Calu3 (cell line): ENCODE measurements at regions of chr15 and their contacts with region 1.

Region 1: DNA sequence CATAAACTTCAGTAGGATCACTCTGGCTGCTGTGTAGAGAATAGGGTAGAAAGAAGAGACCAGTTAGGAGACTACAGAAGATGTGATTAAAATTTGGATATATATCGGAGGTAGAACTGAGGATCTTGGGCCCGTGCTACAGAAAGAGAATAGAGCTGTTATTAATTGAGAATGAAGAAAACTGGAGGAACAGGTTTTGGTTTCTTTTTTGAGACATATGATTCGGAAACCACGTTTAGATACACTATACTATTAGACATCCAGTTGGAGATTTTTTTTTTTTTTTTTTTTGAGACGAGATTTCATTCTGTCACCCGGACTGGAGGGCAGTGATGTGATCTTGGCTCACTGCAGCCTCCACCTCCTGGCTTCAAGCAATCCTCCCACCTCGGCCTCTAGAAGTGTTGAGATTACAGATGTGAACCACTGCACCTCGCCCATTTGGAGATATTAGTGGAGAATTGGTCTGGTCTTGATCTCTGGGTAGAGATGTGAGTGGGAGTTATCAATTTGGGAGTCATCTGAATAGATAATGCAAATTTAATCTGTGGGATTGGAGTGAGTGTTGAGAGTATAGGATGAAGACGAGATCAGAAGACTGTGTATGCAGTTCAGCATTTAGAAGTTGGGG is 50.9 kb downstream of the TCF12 start:
- DNase-seq: no peak
- H3K4me3 Mint-ChIP-seq: peak overlapping the region; percentile 59
- H3K27ac Mint-ChIP-seq: peak overlapping the region; percentile 66
- H3K4me1 Mint-ChIP-seq: peaks cover 70% of the 10 kb centered on the region
- H3K27me3 Mint-ChIP-seq: no peaks in the 10 kb centered on the region
- CTCF ChIP-seq: no peak

Region 2: GRCh38 chr15:56454836-56455235 is 514.5 kb before region 1 on chr15:
- CTCF ChIA-PET with region 1: no interaction called
- intact Hi-C with region 1: no loop called
- DNase-seq: no peak
- H3K4me3 Mint-ChIP-seq: no peak overlapping the region
- H3K27ac Mint-ChIP-seq: no peak overlapping the region
- H3K4me1 Mint-ChIP-seq: no peaks in the 10 kb centered on the region
- H3K27me3 Mint-ChIP-seq: no peaks in the 10 kb centered on the region
- CTCF ChIP-seq: no peak

Region 3: DNA sequence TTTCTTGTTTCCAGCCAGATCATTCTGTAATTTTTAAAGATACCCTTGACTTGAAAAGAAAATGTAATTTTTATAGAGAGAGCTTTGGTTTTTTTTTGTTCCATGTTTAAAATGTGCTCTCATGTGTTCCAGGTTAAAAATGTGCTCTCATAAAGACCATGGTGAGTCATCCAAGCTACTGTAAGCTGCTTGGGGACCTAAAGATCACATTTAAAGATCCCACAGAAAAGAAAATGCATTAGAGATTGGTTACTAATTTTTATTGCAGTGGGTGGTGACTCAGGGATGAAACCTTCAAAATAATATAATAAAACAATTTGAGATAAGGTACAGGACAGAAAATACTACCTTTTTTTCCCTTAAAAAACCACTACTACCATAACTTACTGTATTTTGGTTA is 40.0 kb before region 1 on chr15:
- CTCF ChIA-PET with region 1: no interaction called
- intact Hi-C with region 1: loop called (anchors 5 kb)
- DNase-seq: no peak
- H3K4me3 Mint-ChIP-seq: no peak overlapping the region
- H3K27ac Mint-ChIP-seq: no peak overlapping the region
- H3K4me1 Mint-ChIP-seq: peaks cover 55% of the 10 kb centered on the region
- H3K27me3 Mint-ChIP-seq: no peaks in the 10 kb centered on the region
- CTCF ChIP-seq: no peak